Calu3 (cell line): ENCODE measurements at regions of chr10 and their contacts with region 1.

Region 1: GRCh38 chr10:6667679-6668270 is 87.7 kb upstream of the PRKCQ start:
- DNase-seq: peak; percentile 53
- H3K4me3 Mint-ChIP-seq: no peak overlapping the region
- H3K27ac Mint-ChIP-seq: no peak overlapping the region
- H3K4me1 Mint-ChIP-seq: no peaks in the 10 kb centered on the region
- H3K27me3 Mint-ChIP-seq: peaks cover 17% of the 10 kb centered on the region
- CTCF ChIP-seq: peak; percentile 48

Region 2: DNA sequence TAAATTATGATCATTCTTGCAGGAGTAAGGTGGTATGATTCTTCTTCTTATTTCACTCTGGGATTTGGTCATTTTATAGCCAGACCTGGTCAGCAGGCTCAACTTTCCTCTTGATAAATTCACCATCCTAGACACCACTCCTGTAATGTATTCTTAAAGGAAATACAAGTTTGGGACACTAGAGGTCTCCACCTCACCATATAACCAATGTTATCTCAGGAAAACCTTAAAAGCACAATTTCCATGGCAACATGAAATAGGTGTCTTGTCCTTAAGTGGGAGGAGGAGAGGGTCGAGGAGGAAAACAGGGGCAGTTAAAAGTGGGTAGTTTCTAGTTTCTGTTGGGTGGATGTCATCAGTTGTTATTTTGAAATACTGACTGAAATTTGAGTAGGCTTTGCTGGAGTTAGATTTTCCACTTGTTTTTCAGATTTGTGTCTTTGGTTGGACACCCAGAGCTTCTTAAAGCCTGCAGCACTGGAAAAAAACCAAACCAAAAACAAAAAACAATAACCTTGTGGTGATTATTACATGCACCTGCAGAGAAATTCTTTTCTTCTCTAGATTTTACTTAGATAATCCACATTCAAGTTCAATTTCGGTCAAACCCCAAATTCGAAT is 250.8 kb before region 1 on chr10:
- CTCF ChIA-PET with region 1: no interaction called
- intact Hi-C with region 1: loop called (anchors 1 kb)
- DNase-seq: peak; percentile 27
- H3K4me3 Mint-ChIP-seq: no peak overlapping the region
- H3K27ac Mint-ChIP-seq: no peak overlapping the region
- H3K4me1 Mint-ChIP-seq: no peaks in the 10 kb centered on the region
- H3K27me3 Mint-ChIP-seq: peaks cover 15% of the 10 kb centered on the region
- CTCF ChIP-seq: peak; percentile 31

Region 3: GRCh38 chr10:6445501-6446316 is 222.1 kb before region 1 on chr10:
- CTCF ChIA-PET with region 1: no interaction called
- intact Hi-C with region 1: loop called (anchors 1 kb)
- DNase-seq: peak; percentile 35
- H3K4me3 Mint-ChIP-seq: no peak overlapping the region
- H3K27ac Mint-ChIP-seq: no peak overlapping the region
- H3K4me1 Mint-ChIP-seq: no peaks in the 10 kb centered on the region
- H3K27me3 Mint-ChIP-seq: peaks cover 59% of the 10 kb centered on the region
- CTCF ChIP-seq: peak; percentile 21

Region 4: GRCh38 chr10:6713716-6714115 is 45.9 kb after region 1 on chr10:
- CTCF ChIA-PET with region 1: no interaction called
- intact Hi-C with region 1: no loop called
- DNase-seq: no peak
- H3K4me3 Mint-ChIP-seq: no peak overlapping the region
- H3K27ac Mint-ChIP-seq: no peak overlapping the region
- H3K4me1 Mint-ChIP-seq: peaks cover 28% of the 10 kb centered on the region
- H3K27me3 Mint-ChIP-seq: no peaks in the 10 kb centered on the region
- CTCF ChIP-seq: no peak

Region 5: DNA sequence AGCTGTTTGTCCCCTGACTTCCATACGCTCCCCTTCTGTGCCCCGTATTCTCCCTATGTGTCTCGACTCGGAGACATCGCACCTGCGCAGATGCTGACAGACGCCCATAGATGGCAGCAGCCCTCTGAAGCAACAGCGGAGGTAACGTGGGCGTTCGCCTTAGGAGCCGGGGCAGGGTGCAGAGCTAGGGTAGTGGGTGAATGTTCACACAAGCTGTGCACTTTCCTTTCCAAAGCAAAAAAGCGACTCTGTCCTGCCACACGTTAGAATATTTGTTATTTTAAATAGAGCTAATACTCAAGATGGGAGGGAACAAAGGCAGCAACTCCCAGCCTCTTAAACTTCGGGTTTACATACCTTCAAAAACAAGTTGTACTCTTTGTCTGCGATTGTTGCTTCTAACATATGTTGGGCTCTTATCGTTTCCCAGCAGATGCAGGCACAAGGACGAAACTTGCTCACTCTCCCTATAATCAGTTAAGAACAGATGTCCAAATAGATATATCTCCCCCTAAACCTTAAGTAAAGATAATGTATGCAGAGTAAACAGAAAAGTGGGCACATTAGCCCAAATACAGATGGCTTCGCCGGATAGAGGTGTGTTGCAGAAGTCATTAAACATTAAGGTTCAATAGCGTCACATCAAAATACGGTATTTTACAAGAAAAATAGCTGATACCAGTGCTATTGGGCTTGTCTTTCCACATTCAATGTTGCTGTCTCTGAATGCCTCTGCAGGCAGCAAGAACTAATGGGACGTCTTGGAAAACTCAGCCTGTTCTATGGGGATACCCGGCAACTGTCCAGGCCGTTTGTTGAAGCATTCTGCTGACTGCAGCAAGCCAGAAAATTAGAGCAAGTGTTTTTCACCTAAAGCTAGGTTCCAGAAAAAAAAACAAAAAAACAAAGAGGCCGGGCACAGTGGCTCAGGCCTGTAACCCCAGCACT is 252.6 kb after region 1 on chr10:
- CTCF ChIA-PET with region 1: no interaction called
- intact Hi-C with region 1: loop called (anchors 2 kb)
- DNase-seq: peak; percentile 75
- H3K4me3 Mint-ChIP-seq: peak overlapping the region; percentile 21
- H3K27ac Mint-ChIP-seq: no peak overlapping the region
- H3K4me1 Mint-ChIP-seq: peaks cover 16% of the 10 kb centered on the region
- H3K27me3 Mint-ChIP-seq: peaks cover 9% of the 10 kb centered on the region
- CTCF ChIP-seq: peak; percentile 66

Region 6: DNA sequence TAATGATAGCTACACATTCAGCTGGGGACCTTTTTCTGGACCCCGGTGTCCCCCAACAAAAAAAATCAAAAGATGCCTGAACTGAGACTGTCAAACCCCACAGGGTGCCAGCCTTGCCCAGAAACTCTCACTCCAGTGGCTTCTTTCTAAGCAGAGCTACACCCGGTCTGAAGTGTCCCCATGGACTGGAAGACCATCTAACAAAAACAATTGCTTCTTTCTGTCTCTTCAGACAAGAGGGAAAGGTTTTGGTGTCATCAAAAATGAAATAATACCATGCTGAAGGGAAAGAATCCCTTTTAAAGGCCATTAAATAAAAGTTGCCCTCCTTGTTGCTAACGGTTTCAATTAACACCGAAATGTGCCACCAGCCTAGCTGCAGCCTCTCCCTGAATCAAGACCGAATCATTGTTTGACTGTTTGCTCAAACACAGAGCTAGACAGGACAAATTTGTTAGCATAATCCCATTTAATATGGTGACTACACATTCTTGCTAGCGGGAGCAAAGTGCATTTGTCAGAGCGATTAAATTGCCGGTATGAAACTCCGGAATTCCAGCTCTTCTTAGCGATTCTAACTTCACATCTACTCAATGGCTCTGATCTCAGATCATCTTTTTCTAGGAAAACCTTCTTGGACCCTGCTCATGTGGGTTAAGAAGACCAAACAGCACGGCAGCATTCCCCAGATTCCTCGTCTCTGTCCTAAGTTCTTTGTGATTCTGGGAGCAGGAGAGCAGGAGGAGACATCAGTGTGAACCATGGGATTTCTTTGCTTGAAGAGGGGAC is 309.8 kb after region 1 on chr10:
- CTCF ChIA-PET with region 1: no interaction called
- intact Hi-C with region 1: loop called (anchors 5 kb)
- DNase-seq: no peak
- H3K4me3 Mint-ChIP-seq: no peak overlapping the region
- H3K27ac Mint-ChIP-seq: no peak overlapping the region
- H3K4me1 Mint-ChIP-seq: no peaks in the 10 kb centered on the region
- H3K27me3 Mint-ChIP-seq: peaks cover 84% of the 10 kb centered on the region
- CTCF ChIP-seq: no peak

Region 7: DNA sequence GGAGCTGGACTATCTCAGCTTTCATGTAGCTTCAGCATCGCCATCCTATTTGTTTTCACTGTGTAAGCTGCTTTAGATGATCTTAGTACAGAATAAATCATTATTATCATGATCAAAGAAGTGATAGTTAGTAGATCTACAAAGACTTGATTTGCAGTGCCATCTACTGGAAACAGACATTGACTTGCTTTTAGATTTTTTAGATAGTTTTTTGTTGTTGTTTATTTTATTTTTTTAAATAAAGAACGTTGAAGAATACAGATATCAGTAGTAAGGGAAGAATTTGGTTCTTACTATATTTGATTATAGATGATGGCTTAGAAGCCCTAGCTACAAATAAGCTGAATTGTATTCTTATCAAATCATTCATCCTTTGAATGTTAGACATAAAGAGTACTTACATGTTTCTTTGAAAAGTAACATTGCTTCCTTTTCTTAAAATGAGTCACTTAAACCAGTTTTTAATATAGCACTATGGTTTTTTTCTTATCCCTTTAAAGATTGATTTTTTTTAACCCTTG is 749.4 kb after region 1 on chr10:
- CTCF ChIA-PET with region 1: no interaction called
- intact Hi-C with region 1: loop called (anchors 1 kb)
- DNase-seq: no peak
- H3K4me3 Mint-ChIP-seq: no peak overlapping the region
- H3K27ac Mint-ChIP-seq: no peak overlapping the region
- H3K4me1 Mint-ChIP-seq: no peaks in the 10 kb centered on the region
- H3K27me3 Mint-ChIP-seq: peaks cover 59% of the 10 kb centered on the region
- CTCF ChIP-seq: no peak